Activated CD4-positive, alpha-beta T cell treated with anti-CD3 and anti-CD28 coated beads, Interleukin-2, amount 10 ng/mL, durations not matched to agents 24 days and 14 days (primary cell): ENCODE measurements at regions of chr1 and their contacts with region 1.

Region 1: DNA sequence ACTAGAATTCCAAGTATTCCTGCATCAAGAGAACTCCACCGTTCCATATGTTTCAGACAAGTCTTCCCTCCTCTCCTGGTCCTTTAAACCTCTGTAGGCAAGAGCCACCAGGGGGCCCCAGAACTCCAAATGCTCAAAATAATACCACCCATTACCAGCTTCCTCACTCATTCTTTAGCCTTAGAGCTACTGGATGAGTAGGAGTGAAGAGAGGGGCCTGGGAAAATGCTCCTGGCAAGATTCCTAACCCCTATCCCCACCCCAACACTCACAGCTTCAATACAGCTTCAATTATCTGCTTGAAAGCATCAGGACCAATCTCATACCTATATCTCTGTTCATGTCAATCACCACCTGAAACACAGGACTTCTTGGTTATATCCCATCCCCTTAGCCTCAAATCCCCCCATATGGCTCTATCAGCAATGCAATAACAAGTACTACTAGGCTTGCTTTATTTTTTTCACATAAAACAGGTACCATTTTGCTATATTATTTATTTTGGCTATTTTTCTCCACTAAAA is 9.7 kb downstream of the TOR1AIP2 start:
- DNase-seq: peak; percentile 82
- H3K4me3 Mint-ChIP-seq: no peak overlapping the region
- H3K27ac Mint-ChIP-seq: no peak overlapping the region
- H3K4me1 Mint-ChIP-seq: peaks cover 11% of the 10 kb centered on the region
- H3K27me3 Mint-ChIP-seq: no peaks in the 10 kb centered on the region

Region 2: GRCh38 chr1:180178511-180179161 is 310.8 kb after region 1 on chr1:
- intact Hi-C with region 1: loop called (anchors 1 kb)
- DNase-seq: peak; percentile 91
- H3K4me3 Mint-ChIP-seq: no peak overlapping the region
- H3K27ac Mint-ChIP-seq: no peak overlapping the region
- H3K4me1 Mint-ChIP-seq: no peaks in the 10 kb centered on the region
- H3K27me3 Mint-ChIP-seq: no peaks in the 10 kb centered on the region